ENCODE measurements at regions of chrX and their contacts with region 1.

Region 1: GRCh38 chrX:40735325-40736169 is at the start of gene MED14:
- DNase-seq: peak; percentile 95 to 96 (median 96)
- H3K4me3 ChIP-seq: peak within 1 kb of the TSS; percentile 52 to 73
- H3K4me3 Mint-ChIP-seq: peak within 1 kb of the TSS; percentile 93 to 98 (median 97)
- H3K27ac ChIP-seq: peak within 1 kb of the TSS; percentile 94
- H3K27ac Mint-ChIP-seq: peak within 1 kb of the TSS; percentile 97 to 100 (median 99)
- H3K4me1 ChIP-seq: peaks cover 28% of the 10 kb centered on the region
- H3K4me1 Mint-ChIP-seq: peaks cover 23 to 76% (median 43%) of the 10 kb centered on the region in 4 donors
- H3K27me3 ChIP-seq: no peaks in the 10 kb centered on the region
- H3K27me3 Mint-ChIP-seq: no peaks in the 10 kb centered on the region
- total RNA-seq, gene MED14: 37.9 to 39.0 TPM

Region 2: DNA sequence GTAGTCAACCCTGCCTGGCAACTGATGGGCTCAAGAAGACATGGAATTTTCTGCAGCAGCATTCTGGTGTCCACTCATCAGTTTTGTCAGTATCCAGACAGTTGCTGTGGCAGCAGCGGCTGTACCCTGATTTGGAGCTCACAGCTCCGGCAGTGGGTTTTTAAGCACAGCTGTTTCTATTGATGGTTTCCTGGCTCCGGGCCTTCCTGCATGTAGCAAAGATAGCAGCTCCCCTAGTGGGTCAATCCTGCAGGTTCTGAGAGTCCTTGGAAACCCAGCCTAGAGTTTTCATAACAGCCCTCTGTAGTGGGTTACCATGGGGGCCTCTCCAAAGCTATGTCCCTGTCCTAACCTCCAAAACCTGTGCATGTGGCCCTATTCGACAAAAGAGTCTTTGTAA is 238.8 kb before region 1 on chrX:
- CTCF ChIA-PET with region 1: no interaction called
- POLR2A ChIA-PET with region 1: no interaction called
- intact Hi-C with region 1: no loop called
- DNase-seq: no peak
- H3K4me3 ChIP-seq: no peak overlapping the region
- H3K4me3 Mint-ChIP-seq: no peak overlapping the region
- H3K27ac ChIP-seq: no peak overlapping the region
- H3K27ac Mint-ChIP-seq: no peak overlapping the region
- H3K4me1 ChIP-seq: no peaks in the 10 kb centered on the region
- H3K4me1 Mint-ChIP-seq: no peaks in the 10 kb centered on the region
- H3K27me3 ChIP-seq: no peaks in the 10 kb centered on the region
- H3K27me3 Mint-ChIP-seq: peaks cover 0 to 1% of the 10 kb centered on the region in 2 donors

Region 3: GRCh38 chrX:40580537-40581335 is 154.8 kb before region 1 on chrX and contains the start of gene ATP6AP2:
- CTCF ChIA-PET with region 1: no interaction called
- POLR2A ChIA-PET with region 1: interaction called, 3 read pairs
- intact Hi-C with region 1: loop called (anchors 1 kb)
- DNase-seq: peak; percentile 85 to 93 (median 90)
- H3K4me3 ChIP-seq: peak within 1 kb of the TSS; percentile 61 to 82
- H3K4me3 Mint-ChIP-seq: peak within 1 kb of the TSS; percentile 90 to 95 (median 92)
- H3K27ac ChIP-seq: peak within 1 kb of the TSS; percentile 84
- H3K27ac Mint-ChIP-seq: peak within 1 kb of the TSS; percentile 85 to 98 (median 96)
- H3K4me1 ChIP-seq: peaks cover 21% of the 10 kb centered on the region
- H3K4me1 Mint-ChIP-seq: peaks cover 15 to 35% (median 26%) of the 10 kb centered on the region in 4 donors
- H3K27me3 ChIP-seq: no peaks in the 10 kb centered on the region
- H3K27me3 Mint-ChIP-seq: no peaks in the 10 kb centered on the region
- total RNA-seq, gene ATP6AP2: 80.9 to 86.5 TPM

Region 4: DNA sequence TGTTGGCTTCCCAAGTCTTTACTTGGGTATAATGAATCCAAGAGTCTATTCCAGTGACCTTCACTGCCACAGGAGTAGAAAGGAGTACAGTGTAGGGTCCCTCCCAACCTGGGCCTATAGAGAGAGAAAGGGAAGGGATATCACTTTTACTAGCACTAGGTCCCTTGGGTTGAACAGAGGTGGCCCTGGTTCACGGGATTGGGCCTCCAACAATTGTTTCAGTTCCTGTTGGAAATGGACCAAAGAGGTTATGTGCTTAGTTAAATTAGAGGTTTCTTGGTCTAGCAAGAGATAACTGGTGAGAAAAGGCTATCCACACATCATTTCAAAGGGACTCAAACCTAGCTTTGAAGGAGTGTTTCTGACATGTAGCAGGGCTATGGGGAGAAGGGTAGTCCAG is 56.9 kb after region 1 on chrX:
- CTCF ChIA-PET with region 1: interaction called, 3 read pairs
- POLR2A ChIA-PET with region 1: no interaction called
- intact Hi-C with region 1: loop called (anchors 5 kb)
- DNase-seq: no peak
- H3K4me3 ChIP-seq: no peak overlapping the region
- H3K4me3 Mint-ChIP-seq: no peak overlapping the region
- H3K27ac ChIP-seq: no peak overlapping the region
- H3K27ac Mint-ChIP-seq: no peak overlapping the region
- H3K4me1 ChIP-seq: no peaks in the 10 kb centered on the region
- H3K4me1 Mint-ChIP-seq: peaks cover 0 to 7% (median 3%) of the 10 kb centered on the region in 4 donors
- H3K27me3 ChIP-seq: no peaks in the 10 kb centered on the region
- H3K27me3 Mint-ChIP-seq: peaks cover 3 to 4% of the 10 kb centered on the region in 2 donors

Region 5: GRCh38 chrX:40845331-40845911 is 109.9 kb after region 1 on chrX:
- CTCF ChIA-PET with region 1: no interaction called
- POLR2A ChIA-PET with region 1: no interaction called
- intact Hi-C with region 1: no loop called
- DNase-seq: no peak
- H3K4me3 ChIP-seq: no peak overlapping the region
- H3K4me3 Mint-ChIP-seq: no peak overlapping the region
- H3K27ac ChIP-seq: no peak overlapping the region
- H3K27ac Mint-ChIP-seq: no peak overlapping the region
- H3K4me1 ChIP-seq: no peaks in the 10 kb centered on the region
- H3K4me1 Mint-ChIP-seq: no peaks in the 10 kb centered on the region
- H3K27me3 ChIP-seq: no peaks in the 10 kb centered on the region
- H3K27me3 Mint-ChIP-seq: peaks cover 0 to 5% of the 10 kb centered on the region in 2 donors

Region 6: DNA sequence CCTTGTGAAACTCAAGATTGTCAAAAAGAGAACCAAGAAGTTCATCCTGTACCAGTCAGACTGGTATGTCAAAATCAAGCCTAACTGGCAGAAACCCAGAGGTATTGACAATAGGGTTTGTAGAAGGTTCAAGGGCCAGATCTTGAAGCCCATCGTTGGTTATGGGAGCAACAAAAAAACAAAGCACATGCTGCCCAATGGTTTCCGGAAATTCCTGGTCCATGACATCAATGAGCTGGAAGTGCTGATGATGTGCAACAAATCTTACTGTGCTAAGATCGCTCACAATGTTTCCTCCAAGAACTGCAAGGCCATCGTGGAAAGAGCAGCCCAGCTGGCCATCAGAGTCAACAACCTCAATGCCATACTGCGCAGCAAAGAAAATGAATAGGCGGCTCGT is 172.5 kb after region 1 on chrX:
- CTCF ChIA-PET with region 1: no interaction called
- POLR2A ChIA-PET with region 1: no interaction called
- intact Hi-C with region 1: no loop called
- DNase-seq: no peak
- H3K4me3 ChIP-seq: no peak overlapping the region
- H3K4me3 Mint-ChIP-seq: no peak overlapping the region
- H3K27ac ChIP-seq: no peak overlapping the region
- H3K27ac Mint-ChIP-seq: no peak overlapping the region
- H3K4me1 ChIP-seq: no peaks in the 10 kb centered on the region
- H3K4me1 Mint-ChIP-seq: no peaks in the 10 kb centered on the region
- H3K27me3 ChIP-seq: no peaks in the 10 kb centered on the region
- H3K27me3 Mint-ChIP-seq: no peaks in the 10 kb centered on the region

Region 7: GRCh38 chrX:40964633-40965586 is 229.4 kb after region 1 on chrX:
- CTCF ChIA-PET with region 1: no interaction called
- POLR2A ChIA-PET with region 1: no interaction called
- intact Hi-C with region 1: no loop called
- DNase-seq: no peak
- H3K4me3 ChIP-seq: no peak overlapping the region
- H3K4me3 Mint-ChIP-seq: no peak overlapping the region
- H3K27ac ChIP-seq: no peak overlapping the region
- H3K27ac Mint-ChIP-seq: no peak overlapping the region
- H3K4me1 ChIP-seq: no peaks in the 10 kb centered on the region
- H3K4me1 Mint-ChIP-seq: peaks cover 0 to 1% (median 0%) of the 10 kb centered on the region in 4 donors
- H3K27me3 ChIP-seq: no peaks in the 10 kb centered on the region
- H3K27me3 Mint-ChIP-seq: no peaks in the 10 kb centered on the region